ENCODE measurements at regions of chr7 and their contacts with region 1.

Region 1: DNA sequence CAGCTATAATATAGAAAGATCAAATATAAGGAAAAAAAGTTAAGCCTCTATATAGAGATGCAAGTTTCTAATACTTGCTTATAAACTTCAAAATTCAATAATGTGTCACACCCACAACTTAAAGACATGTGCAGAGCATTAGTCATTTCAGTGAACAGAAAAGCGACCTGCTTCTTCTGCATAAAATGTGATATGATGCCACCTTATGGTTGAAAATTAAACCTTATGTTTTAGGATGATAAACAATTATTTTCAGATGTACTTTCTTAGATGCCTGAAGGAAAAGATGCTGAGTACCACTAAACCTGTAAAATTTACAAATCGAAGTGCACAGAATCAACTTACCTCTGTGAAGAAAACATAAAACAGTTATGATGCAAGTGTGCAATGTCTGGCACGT is 96.0 kb downstream of the MTERF1 start:
- DNase-seq: no peak
- ATAC-seq: no peak
- H3K4me3 ChIP-seq: no peak overlapping the region
- H3K27ac ChIP-seq: no peak overlapping the region
- H3K4me1 ChIP-seq: no peaks in the 10 kb centered on the region
- H3K27me3 ChIP-seq: no peaks in the 10 kb centered on the region
- CTCF ChIP-seq: peak in 1 of 3 experiments; percentile 30; a peak in 2 of 6 replicates
- EP300 ChIP-seq: no peak
- POLR2A ChIP-seq: no peak
- RAD21 ChIP-seq: peak; percentile 50

Region 2: DNA sequence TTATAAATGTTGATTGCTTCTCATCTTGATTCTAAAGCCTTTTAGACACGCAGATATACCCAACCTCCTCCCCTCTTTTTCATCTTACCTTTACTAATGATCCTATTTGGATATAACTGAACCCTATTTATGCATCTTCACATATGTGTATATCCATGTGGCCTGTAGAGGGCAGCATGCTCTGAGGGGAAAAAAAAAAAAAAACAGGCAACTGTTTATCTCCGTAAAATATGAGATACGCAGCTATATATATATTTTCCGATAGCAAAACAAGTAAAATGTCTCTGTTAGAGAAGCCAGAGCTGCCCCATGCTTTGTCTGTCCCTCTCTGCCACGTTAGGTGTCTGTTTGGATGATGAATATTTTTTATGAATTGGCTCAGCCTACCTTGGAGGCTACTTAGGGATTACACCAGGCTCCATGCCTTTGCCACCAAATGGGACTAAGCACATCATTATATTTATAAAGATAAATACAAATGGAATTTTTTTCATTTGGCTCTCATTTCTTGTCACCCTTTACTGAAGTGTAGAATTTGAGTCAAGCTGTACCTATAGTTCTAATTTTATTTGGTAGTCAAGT is 695.0 kb before region 1 on chr7:
- CTCF ChIA-PET with region 1: interaction called, 5 read pairs
- POLR2A ChIA-PET with region 1: no interaction called
- RAD21 ChIA-PET with region 1: no interaction called
- SMC1A ChIA-PET with region 1: no interaction called
- in situ Hi-C with region 1: no loop called
- intact Hi-C with region 1: loop called (anchors 10 kb)
- DNase-seq: no peak
- ATAC-seq: peak; percentile 82
- H3K4me3 ChIP-seq: no peak overlapping the region
- H3K27ac ChIP-seq: no peak overlapping the region
- H3K4me1 ChIP-seq: no peaks in the 10 kb centered on the region
- H3K27me3 ChIP-seq: no peaks in the 10 kb centered on the region
- CTCF ChIP-seq: peak; percentile 59 to 70 (median 67)
- EP300 ChIP-seq: no peak
- POLR2A ChIP-seq: no peak
- RAD21 ChIP-seq: peak; percentile 64

Region 3: DNA sequence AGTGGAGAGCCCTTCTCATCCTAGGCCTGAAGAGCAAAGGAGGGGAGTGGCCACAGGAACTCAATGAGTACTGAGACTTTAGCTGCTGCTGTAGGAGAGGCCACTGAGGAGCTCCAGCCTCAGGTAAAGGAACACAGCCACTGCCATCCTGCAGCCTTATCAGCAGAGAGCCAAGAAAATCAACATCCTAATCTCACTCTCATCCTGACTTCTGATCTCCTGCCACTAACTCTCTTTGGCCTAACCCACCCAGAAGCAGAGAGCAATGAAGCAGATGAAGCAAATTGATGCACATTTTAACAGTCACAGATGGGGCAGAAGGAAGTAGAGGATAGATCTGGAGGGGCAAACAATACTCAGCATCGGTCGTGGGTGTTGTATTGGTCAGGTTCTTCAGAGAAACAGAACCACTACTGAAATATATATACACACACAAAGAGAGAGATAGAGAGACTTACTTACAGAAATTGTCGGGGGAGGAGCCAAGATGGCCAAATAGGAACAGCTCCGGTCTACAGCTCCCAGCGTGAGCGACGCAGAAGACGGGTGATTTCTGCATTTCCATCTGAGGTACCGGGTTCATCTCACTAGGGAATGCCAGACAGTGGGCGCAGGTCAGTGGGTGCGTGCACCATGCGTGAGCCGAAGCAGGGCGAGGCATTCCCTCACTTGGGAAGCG is 201.5 kb before region 1 on chr7:
- CTCF ChIA-PET with region 1: no interaction called
- POLR2A ChIA-PET with region 1: no interaction called
- RAD21 ChIA-PET with region 1: no interaction called
- SMC1A ChIA-PET with region 1: no interaction called
- in situ Hi-C with region 1: no loop called
- intact Hi-C with region 1: no loop called
- DNase-seq: no peak
- ATAC-seq: no peak
- H3K4me3 ChIP-seq: no peak overlapping the region
- H3K27ac ChIP-seq: no peak overlapping the region
- H3K4me1 ChIP-seq: no peaks in the 10 kb centered on the region
- H3K27me3 ChIP-seq: no peaks in the 10 kb centered on the region
- CTCF ChIP-seq: no peak
- EP300 ChIP-seq: no peak
- POLR2A ChIP-seq: no peak
- RAD21 ChIP-seq: no peak

Region 4: GRCh38 chr7:91796122-91796521 is 11.7 kb after region 1 on chr7:
- CTCF ChIA-PET with region 1: no interaction called
- POLR2A ChIA-PET with region 1: no interaction called
- RAD21 ChIA-PET with region 1: no interaction called
- SMC1A ChIA-PET with region 1: no interaction called
- in situ Hi-C with region 1: no loop called
- intact Hi-C with region 1: no loop called
- DNase-seq: no peak
- ATAC-seq: no peak
- H3K4me3 ChIP-seq: no peak overlapping the region
- H3K27ac ChIP-seq: no peak overlapping the region
- H3K4me1 ChIP-seq: no peaks in the 10 kb centered on the region
- H3K27me3 ChIP-seq: no peaks in the 10 kb centered on the region; a peak in 1 of 4 replicates
- CTCF ChIP-seq: no peak
- EP300 ChIP-seq: no peak
- POLR2A ChIP-seq: no peak
- RAD21 ChIP-seq: no peak

Measured in GM12878 (cell line).